CD8-positive, alpha-beta T cell (primary cell): ENCODE measurements at regions of chr10 and their contacts with region 1.

Region 1: GRCh38 chr10:90871766-90872647 is at the start of gene RPP30:
- DNase-seq: peak; percentile 65 to 84 (median 79)
- ATAC-seq: peak; percentile 99
- H3K4me3 ChIP-seq: peak within 1 kb of the TSS; percentile 73 to 95
- H3K4me3 Mint-ChIP-seq: peak within 1 kb of the TSS; percentile 97
- H3K27ac ChIP-seq: peak within 1 kb of the TSS; percentile 34 to 58
- H3K27ac Mint-ChIP-seq: peak within 1 kb of the TSS; percentile 88
- H3K4me1 ChIP-seq: peaks cover 18% of the 10 kb centered on the region
- H3K4me1 Mint-ChIP-seq: peaks cover 40% of the 10 kb centered on the region
- H3K27me3 ChIP-seq: no peaks in the 10 kb centered on the region
- H3K27me3 Mint-ChIP-seq: peaks cover 20% of the 10 kb centered on the region
- CTCF ChIP-seq: no peak
- total RNA-seq, gene RPP30: 29.7 TPM

Region 2: DNA sequence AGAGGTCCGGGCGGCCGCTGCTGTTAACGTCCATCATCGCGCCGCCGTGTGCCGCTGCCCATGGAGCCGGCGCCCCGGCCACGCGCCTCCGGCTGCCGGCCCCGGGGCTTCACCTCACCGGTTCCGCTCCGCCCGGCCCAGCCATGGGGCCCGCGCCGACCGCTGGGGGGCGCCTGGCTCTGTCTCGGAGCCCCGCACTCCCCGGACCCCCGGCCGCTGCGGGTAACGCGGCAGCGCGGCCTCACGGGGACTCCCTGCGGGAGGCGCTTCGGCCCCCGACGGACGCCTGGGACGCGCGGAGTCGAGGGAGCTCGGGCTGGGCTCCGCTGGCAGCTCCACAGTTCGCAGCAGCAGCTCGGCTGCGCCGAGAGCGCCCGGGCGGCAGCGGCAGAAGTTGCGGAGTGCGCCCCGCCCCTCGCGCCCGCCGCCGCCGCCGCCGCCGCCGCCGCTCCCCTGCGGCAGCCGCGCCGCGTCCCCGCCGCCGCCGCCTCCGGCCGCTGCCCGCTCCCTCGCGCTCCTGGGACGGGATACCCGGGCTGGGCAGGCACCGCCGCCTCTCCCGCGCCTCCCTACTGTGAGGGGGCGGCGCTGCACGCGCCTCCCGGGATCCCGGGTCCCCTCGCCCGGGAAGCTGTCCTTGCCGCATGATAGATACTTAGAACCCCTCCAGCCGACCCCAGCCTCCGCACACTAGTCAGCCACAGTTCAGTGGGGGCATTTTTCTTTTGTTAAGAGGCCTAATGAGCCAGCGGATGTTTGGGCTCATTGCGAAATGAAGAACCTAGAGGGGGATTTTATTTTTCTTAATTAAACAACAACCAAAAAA is 14.2 kb before region 1 on chr10 and contains the start of gene HTR7:
- CTCF ChIA-PET with region 1: interaction called, 22 read pairs
- POLR2A ChIA-PET with region 1: interaction called, 4 read pairs
- intact Hi-C with region 1: loop called in 1 of 2 experiments (anchors 1 kb)
- DNase-seq: peak; percentile 44 to 82 (median 57)
- ATAC-seq: peak; percentile 84
- H3K4me3 ChIP-seq: peak within 1 kb of the TSS; percentile 42 to 54
- H3K4me3 Mint-ChIP-seq: peak within 1 kb of the TSS; percentile 88
- H3K27ac ChIP-seq: no peak within 1 kb of the TSS
- H3K27ac Mint-ChIP-seq: peak within 1 kb of the TSS; percentile 30
- H3K4me1 ChIP-seq: peaks cover 9% of the 10 kb centered on the region
- H3K4me1 Mint-ChIP-seq: peaks cover 8% of the 10 kb centered on the region
- H3K27me3 ChIP-seq: peaks cover 25% of the 10 kb centered on the region in 2 experiments
- H3K27me3 Mint-ChIP-seq: peaks cover 49% of the 10 kb centered on the region
- CTCF ChIP-seq: peak; percentile 69
- total RNA-seq, gene HTR7: not detected